ENCODE measurements at regions of chr5 and their contacts with region 1.

Region 1: DNA sequence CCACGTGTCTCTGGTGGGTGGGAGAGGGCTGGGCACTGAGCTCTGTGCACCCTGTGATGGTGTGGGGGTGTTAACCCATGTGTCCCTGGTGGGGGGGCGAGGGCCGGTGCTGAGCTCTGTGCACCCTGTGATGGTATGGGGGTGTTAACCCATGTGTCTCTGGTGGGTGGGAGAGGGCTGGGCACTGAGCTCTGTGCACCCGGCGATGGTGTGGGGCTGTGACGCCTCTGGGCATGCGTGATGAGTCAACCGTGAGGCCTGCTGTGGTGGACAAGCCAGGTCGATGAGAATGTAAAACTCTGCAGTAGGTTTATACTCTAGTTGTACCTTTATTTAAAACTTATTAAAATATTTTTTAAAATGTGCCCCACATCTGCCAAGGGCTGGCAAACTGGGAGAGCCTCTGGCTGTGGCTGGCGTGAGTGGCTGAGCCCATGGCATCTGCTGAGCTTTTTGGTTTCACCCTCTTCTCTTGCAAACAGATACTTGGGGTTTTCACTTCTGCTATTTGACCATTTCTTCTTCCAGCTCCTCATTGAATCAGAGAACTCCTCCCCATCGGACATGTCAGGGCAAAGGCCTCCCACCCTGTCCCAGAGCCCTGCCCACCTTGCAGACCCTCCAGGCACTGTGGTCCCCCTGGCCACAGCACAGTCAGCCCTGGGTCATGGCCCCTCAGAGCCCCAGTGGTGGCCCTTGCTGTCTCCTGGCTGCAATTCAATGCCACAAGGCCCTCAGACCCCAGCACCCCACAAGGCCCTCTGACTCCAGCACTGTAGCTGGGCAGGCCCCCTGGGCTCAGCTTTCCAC is 18.5 kb upstream of the EXOC3 start:
- DNase-seq: peak; percentile 47
- H3K4me3 ChIP-seq: no peak overlapping the region
- H3K27ac ChIP-seq: no peak overlapping the region
- H3K4me1 ChIP-seq: peaks cover 7% of the 10 kb centered on the region
- CTCF ChIP-seq: no peak

Region 2: DNA sequence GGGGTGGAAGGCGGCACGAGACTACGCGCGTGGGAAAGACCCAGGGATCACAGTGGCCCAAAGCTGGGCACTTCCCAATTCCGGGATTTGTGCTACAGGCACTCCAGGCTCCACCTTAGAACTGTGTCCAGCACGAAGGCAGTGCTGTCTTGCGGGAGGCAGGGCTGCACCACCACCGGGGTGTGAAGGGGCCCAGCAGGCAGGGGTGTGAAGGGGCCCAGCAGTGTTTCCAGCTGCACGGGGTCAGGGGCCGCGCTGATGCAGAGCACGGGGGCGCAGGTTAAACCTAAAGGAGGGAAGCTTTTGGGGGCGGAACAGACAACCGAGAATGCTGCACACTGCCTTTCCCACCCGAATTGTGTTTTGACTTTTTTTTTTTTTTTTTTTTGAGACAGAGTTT is 154.2 kb before region 1 on chr5:
- CTCF ChIA-PET with region 1: interaction called, 11 read pairs
- POLR2A ChIA-PET with region 1: no interaction called
- intact Hi-C with region 1: no loop called
- DNase-seq: no peak
- H3K4me3 ChIP-seq: peak overlapping the region; percentile 97
- H3K27ac ChIP-seq: peak overlapping the region; percentile 69
- H3K4me1 ChIP-seq: peaks cover 19% of the 10 kb centered on the region
- CTCF ChIP-seq: no peak

Region 3: DNA sequence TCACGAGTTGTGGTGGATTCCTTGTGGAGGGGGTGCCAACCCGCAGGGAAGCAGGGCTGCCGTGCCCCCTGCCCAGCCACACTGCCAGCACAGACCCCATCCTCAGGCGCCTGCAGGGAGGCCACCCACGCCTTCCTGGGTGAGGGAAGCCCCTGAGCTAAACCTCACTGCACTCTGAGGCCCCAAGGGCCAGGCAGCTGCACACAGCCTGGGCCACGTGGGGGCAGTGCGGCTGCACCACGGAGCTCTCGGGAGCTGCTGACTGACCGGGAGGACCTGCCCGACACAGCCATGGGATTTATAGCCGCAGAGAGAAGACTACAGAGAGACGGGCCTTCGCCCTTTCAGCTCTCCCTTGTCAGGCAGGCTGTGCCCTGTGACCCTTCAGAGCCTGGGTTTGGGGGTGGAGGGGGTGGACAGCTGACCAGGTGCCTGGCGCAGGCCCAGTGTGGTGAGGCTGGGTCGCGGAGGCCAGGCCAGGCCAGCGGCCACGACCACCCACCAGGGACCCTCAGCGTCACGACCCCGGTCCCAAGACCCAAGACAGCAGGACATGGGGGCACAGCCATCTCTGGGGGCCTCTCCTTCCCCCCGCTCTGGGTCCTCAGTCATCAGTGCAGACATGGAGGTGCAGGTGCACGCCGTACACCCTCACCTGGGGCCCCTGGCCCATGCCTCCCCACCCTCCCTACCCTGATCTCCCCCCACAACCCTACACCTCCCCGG is 107.3 kb before region 1 on chr5:
- CTCF ChIA-PET with region 1: no interaction called
- POLR2A ChIA-PET with region 1: no interaction called
- intact Hi-C with region 1: loop called (anchors 2 kb)
- DNase-seq: peak; percentile 62
- H3K4me3 ChIP-seq: no peak overlapping the region
- H3K27ac ChIP-seq: no peak overlapping the region
- H3K4me1 ChIP-seq: no peaks in the 10 kb centered on the region
- CTCF ChIP-seq: peak; percentile 70

Region 4: DNA sequence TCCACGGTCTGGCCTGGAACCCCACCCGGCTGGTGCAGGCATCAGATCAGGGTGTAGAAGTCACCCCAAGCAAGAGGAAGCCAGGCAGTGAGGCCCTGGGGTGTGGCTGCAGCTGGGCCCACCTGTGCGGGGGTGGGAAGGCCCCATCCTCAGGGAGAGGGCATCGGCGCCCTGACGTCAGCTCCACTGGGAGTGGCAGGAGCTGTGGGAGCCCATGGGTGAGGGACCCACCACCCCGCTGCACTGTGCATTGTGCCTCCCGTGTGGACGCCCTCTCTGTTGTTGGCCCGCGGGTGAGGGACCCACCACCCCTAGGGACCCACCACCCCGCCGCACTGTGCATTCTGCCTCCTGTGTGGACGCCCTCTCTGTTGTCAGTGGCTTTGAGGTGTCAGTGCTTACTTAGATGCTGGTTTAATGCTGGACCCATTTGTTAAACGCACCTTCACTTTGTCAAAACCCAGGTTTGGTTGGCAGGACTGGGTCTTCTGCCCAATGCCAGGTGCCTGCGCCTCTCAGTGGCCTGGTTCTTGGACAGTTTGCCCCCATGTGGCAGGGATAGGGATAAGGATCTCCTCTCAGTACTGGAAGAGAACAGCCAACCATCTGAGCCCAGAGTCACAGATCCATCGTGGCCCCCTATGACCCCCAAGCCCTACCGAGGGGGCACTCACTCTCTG is 11.6 kb after region 1 on chr5:
- CTCF ChIA-PET with region 1: no interaction called
- POLR2A ChIA-PET with region 1: no interaction called
- intact Hi-C with region 1: no loop called
- DNase-seq: no peak
- H3K4me3 ChIP-seq: no peak overlapping the region
- H3K27ac ChIP-seq: no peak overlapping the region
- H3K4me1 ChIP-seq: peaks cover 9% of the 10 kb centered on the region
- CTCF ChIP-seq: peak; percentile 55

Region 5: DNA sequence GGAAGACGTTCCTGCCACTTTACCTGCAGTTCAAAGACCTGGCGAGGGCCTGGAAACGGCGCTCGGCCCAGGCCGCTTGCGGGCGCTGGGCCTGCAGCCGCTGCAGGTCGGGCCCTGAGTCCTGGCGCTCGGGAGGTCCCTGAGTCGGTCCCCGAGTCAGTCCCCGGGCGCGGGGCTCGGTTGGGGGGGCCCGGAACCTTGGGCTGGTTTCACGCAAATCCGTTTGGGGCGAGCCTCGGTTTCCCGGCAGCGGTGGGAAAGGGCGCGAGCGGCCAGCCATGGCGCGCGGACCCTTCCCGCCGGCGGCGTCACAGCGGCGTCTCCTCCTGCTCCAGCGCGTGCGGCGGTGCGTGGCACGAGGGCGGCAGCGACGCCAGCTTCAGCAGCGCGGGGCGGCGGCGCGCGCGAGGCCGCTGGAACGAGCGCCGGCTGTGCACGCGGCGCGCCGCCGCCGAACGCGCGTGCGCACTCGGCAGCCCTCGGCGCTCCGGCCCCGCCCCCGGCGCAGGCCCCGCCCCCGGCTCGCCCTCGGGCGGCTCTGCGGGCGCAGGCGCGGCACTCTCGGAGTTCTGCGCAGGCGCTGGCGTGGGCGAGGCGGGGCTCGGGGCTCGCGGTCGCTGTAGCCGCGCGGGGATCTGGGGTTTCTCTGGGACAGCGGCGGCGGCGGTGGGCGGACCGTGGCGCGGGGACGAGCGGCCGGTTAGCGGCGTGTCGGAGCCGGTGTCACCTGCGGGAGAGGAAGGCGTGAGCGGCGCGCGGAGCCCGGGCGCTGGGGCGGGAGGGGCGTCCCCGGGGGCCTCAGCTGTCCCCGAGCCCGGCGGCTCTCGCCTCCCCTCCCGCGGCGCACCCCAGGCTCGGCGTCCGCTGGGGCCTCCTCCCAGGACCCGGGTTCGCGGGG is 48.4 kb after region 1 on chr5:
- CTCF ChIA-PET with region 1: interaction called, 24 read pairs
- POLR2A ChIA-PET with region 1: no interaction called
- intact Hi-C with region 1: no loop called
- DNase-seq: peak; percentile 91
- H3K4me3 ChIP-seq: peak overlapping the region; percentile 85
- H3K27ac ChIP-seq: peak overlapping the region; percentile 50
- H3K4me1 ChIP-seq: peaks cover 24% of the 10 kb centered on the region
- CTCF ChIP-seq: no peak

Measured in OCI-LY7 (cell line).